HEK293 (cell line): ENCODE measurements at regions of chr5 and their contacts with region 1.

Region 1: GRCh38 chr5:74919487-74919886 is 53.3 kb upstream of the FAM169A start:
- H3K4me3 ChIP-seq: no peak overlapping the region
- H3K27ac ChIP-seq: no peak overlapping the region
- H3K4me1 ChIP-seq: peaks cover 2% of the 10 kb centered on the region; the same call in 1 of the 2 replicates
- CTCF ChIP-seq: no peak

Region 2: GRCh38 chr5:74673011-74673790 is 246.3 kb before region 1 on chr5:
- CTCF ChIA-PET with region 1: interaction called, 23 read pairs
- POLR2A ChIA-PET with region 1: no interaction called
- H3K4me3 ChIP-seq: no peak overlapping the region
- H3K27ac ChIP-seq: no peak overlapping the region
- H3K4me1 ChIP-seq: no peaks in the 10 kb centered on the region
- CTCF ChIP-seq: peak; percentile 39; the same call in 1 of the 2 replicates

Region 3: DNA sequence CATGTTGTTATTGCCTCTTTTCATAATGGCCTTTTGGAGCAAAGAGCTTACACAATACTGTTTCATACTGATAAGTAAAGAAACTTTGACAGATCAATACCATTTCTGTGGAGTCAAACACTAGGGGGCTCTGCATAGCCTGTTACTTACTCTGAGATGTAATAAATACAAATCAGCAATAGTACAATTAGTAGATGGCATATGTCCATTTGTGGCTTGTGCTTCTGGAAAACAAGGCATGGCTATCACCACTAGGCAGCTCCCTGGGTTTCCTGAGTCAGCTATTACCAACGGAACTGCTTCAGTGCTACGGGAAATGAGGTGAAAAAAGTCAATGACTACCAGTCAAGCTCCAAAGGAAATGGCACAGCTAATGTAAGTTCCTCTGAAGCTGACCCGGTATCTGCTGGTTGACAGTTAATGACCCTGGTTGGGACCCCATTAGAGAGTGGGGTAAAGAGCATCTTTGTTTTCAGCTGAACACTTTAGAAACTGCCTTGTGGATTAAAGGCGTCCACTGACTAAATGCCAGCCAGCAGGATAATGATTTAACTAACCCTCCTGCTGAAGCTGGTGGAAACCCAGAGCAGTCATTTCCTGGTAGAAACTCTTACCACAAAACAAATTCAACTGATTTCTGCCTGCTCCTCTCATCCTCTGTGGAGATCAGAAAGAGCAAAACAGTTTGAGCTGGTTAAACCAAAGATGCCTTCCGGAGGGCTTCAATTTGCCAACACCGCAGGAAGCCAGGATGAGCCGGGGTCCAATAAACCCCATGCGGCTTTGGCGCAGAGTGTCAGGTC is 15.7 kb after region 1 on chr5:
- CTCF ChIA-PET with region 1: interaction called, 11 read pairs
- POLR2A ChIA-PET with region 1: no interaction called
- H3K4me3 ChIP-seq: no peak overlapping the region
- H3K27ac ChIP-seq: no peak overlapping the region
- H3K4me1 ChIP-seq: no peaks in the 10 kb centered on the region
- CTCF ChIP-seq: no peak

Region 4: DNA sequence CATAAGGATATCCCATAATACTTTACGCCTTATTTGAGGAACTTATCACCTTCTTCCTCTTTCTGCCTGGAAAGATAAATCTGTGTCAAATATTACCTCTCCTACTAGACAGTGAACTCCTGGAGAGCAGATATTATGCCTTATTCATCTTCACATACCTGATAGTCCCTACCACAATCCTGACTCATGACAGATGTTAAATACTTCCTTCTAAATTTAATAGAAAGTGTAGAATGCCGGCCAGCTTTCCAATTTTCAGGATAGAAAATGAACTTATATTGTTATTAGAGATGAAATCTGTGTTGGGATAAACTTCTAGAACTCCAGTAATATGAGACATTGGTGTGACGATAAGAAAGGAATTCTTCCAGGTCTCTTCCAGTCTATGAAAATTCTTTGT is 43.9 kb after region 1 on chr5:
- CTCF ChIA-PET with region 1: no interaction called
- POLR2A ChIA-PET with region 1: no interaction called
- H3K4me3 ChIP-seq: no peak overlapping the region
- H3K27ac ChIP-seq: no peak overlapping the region
- H3K4me1 ChIP-seq: no peaks in the 10 kb centered on the region
- CTCF ChIP-seq: no peak